Panc1 (cell line): ENCODE measurements at regions of chr7 and their contacts with region 1.

Region 1: GRCh38 chr7:107394831-107395230 is 75.0 kb upstream of the GPR22 start:
- DNase-seq: no peak
- ATAC-seq: no peak
- H3K4me3 ChIP-seq: no peak overlapping the region
- H3K27ac ChIP-seq: no peak overlapping the region
- H3K4me1 ChIP-seq: no peaks in the 10 kb centered on the region
- H3K27me3 ChIP-seq: no peaks in the 10 kb centered on the region
- CTCF ChIP-seq: no peak

Region 2: GRCh38 chr7:107286751-107287621 is 107.8 kb before region 1 on chr7:
- CTCF ChIA-PET with region 1: no interaction called
- POLR2A ChIA-PET with region 1: interaction called, 10 read pairs
- in situ Hi-C with region 1: no loop called
- intact Hi-C with region 1: no loop called
- DNase-seq: no peak
- ATAC-seq: no peak
- H3K4me3 ChIP-seq: no peak overlapping the region
- H3K27ac ChIP-seq: no peak overlapping the region
- H3K4me1 ChIP-seq: no peaks in the 10 kb centered on the region
- H3K27me3 ChIP-seq: no peaks in the 10 kb centered on the region
- CTCF ChIP-seq: no peak

Region 3: GRCh38 chr7:107355616-107356015 is 39.2 kb before region 1 on chr7:
- CTCF ChIA-PET with region 1: no interaction called
- POLR2A ChIA-PET with region 1: no interaction called
- in situ Hi-C with region 1: no loop called
- intact Hi-C with region 1: no loop called
- DNase-seq: no peak
- ATAC-seq: no peak
- H3K4me3 ChIP-seq: no peak overlapping the region
- H3K27ac ChIP-seq: no peak overlapping the region
- H3K4me1 ChIP-seq: no peaks in the 10 kb centered on the region
- H3K27me3 ChIP-seq: no peaks in the 10 kb centered on the region
- CTCF ChIP-seq: no peak

Region 4: DNA sequence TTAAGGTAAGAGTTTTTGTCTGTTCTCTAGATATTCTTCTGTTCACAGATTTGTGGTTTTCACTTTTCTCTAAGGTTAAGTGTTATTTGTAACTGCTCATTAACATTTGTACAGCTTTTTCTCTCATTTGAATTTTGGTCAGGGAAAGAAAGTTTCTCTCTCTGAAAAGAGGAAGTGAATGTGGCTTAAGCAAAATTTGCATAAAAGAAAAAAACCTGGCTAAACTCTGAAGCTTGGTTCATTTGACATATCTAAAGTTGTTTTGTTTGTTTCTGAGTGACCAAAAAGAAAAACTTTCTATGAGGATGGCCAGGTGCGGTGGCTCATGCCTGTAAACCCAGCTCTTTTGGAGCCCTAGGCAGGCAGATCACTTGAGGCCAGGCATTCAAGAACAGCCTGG is 243.8 kb after region 1 on chr7:
- CTCF ChIA-PET with region 1: no interaction called
- POLR2A ChIA-PET with region 1: no interaction called
- in situ Hi-C with region 1: no loop called
- intact Hi-C with region 1: no loop called
- DNase-seq: no peak
- ATAC-seq: no peak
- H3K4me3 ChIP-seq: no peak overlapping the region
- H3K27ac ChIP-seq: no peak overlapping the region
- H3K4me1 ChIP-seq: no peaks in the 10 kb centered on the region
- H3K27me3 ChIP-seq: peaks cover 18% of the 10 kb centered on the region
- CTCF ChIP-seq: no peak

Region 5: GRCh38 chr7:107958764-107959526 is 564.1 kb after region 1 on chr7:
- CTCF ChIA-PET with region 1: no interaction called
- POLR2A ChIA-PET with region 1: no interaction called
- in situ Hi-C with region 1: no loop called
- intact Hi-C with region 1: no loop called
- DNase-seq: no peak
- ATAC-seq: no peak
- H3K4me3 ChIP-seq: no peak overlapping the region
- H3K27ac ChIP-seq: peak overlapping the region; percentile 3; the same call in 1 of the 2 replicates
- H3K4me1 ChIP-seq: peaks cover 4% of the 10 kb centered on the region
- H3K27me3 ChIP-seq: no peaks in the 10 kb centered on the region
- CTCF ChIP-seq: no peak